Right cardiac atrium (tissue), 5 donors: ENCODE measurements at regions of chr12 and their contacts with region 1.

Region 1: GRCh38 chr12:50986966-50987737 is 34.8 kb downstream of the HIGD1C start:
- DNase-seq: no peak
- ATAC-seq: peak; percentile 63 to 73
- H3K4me3 ChIP-seq: no peak overlapping the region
- H3K27ac ChIP-seq: peak overlapping the region; percentile 43
- H3K4me1 ChIP-seq: peaks cover 3% of the 10 kb centered on the region
- H3K27me3 ChIP-seq: no peaks in the 10 kb centered on the region

Region 2: DNA sequence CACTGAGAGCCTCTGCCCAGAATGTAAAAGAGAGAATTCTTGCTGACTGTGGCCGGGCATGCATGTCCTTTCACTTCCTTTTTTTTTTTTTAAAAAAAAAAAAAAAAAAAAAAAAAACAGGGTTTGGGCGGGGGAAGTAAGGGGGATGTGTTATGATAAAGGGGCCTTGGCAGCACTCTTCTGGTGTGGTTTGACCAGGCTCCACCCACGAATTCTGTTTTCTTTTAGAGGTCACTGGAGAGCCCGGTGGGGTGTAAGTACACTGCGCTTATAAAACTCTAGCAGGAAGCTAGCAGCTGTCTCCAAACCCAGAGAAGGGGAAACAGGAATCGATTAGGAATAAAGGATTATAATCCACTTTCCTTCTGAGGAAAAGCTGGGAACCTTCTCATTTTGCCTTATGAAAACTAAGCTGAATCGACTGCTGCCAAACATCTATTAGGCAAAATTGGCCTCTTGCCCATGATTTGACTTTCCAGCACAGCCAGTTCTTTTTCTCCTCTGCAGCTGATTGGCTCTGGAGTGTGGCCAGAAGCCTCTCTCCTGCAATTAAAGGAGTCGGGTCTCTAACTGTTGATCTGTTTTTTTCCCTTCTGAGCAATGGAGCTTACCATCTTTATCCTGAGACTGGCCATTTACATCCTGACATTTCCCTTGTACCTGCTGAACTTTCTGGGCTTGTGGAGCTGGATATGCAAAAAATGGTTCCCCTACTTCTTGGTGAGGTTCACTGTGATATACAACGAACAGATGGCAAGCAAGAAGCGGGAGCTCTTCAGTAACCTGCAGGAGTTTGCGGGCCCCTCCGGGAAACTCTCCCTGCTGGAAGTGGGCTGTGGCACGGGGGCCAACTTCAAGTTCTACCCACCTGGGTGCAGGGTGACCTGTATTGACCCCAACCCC is 62.5 kb before region 1 on chr12:
- intact Hi-C with region 1: loop called in 2 of 4 experiments (anchors 5 to 10 kb)
- DNase-seq: peak; percentile 92 to 96 (median 93)
- ATAC-seq: peak; percentile 97 to 98
- H3K4me3 ChIP-seq: peak overlapping the region; percentile 99
- H3K27ac ChIP-seq: peak overlapping the region; percentile 99
- H3K4me1 ChIP-seq: peaks cover 9% of the 10 kb centered on the region
- H3K27me3 ChIP-seq: no peaks in the 10 kb centered on the region

Region 3: DNA sequence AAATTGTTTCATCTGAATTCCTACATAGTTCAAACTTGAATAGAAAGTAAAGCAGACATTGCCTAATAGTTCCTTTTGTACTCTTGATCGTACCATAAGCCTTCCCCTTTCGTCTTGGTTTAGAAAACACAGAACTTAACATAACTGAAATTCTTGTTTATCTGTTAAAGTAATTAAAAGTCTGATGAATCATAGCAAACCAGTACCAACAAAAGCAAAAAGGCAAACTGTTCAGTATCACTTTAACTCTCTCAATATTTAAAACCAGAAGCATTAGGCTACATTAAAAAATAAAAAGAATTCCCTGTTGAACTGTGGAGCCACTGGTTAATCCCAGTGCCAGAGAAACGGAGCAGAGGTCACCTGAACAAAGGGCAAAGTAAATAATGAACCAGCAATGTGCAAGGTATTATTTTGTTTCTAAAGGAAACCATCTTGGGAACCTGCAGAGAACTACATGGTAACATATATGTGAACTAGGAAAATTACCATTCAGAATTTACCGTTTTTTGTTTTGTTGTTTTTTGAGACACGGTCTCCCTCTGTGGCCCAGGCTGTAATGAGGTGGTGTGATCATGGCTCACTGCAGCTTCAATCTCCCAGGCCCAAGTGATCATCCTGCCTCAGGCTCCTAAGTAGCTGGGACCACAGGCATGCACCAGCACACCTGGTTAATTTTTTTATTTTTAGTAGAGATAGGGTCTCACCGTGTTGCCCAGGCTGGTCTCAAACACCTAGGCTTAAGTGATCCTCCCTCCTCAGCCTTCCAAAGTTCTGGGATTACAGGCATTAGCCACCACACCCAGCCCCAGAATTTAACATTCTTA is 52.0 kb before region 1 on chr12:
- intact Hi-C with region 1: no loop called
- DNase-seq: no peak
- ATAC-seq: peak; percentile 48 to 61
- H3K4me3 ChIP-seq: no peak overlapping the region
- H3K27ac ChIP-seq: peak overlapping the region; percentile 68
- H3K4me1 ChIP-seq: peaks cover 6% of the 10 kb centered on the region
- H3K27me3 ChIP-seq: no peaks in the 10 kb centered on the region